ENCODE measurements at regions of chr20 and their contacts with region 1.

Region 1: GRCh38 chr20:42051921-42052320 is 433.7 kb upstream of the CHD6 start:
- DNase-seq: no peak
- H3K4me3 ChIP-seq: no peak overlapping the region
- H3K27ac ChIP-seq: no peak overlapping the region
- H3K4me1 ChIP-seq: no peaks in the 10 kb centered on the region
- H3K27me3 ChIP-seq: no peaks in the 10 kb centered on the region
- CTCF ChIP-seq: no peak
- EP300 ChIP-seq: no peak
- POLR2A ChIP-seq: no peak
- RAD21 ChIP-seq: no peak

Region 2: GRCh38 chr20:42041072-42041471 is 10.8 kb before region 1 on chr20:
- CTCF ChIA-PET with region 1: interaction called, 10 read pairs
- POLR2A ChIA-PET with region 1: no interaction called
- DNase-seq: no peak
- H3K4me3 ChIP-seq: no peak overlapping the region
- H3K27ac ChIP-seq: no peak overlapping the region
- H3K4me1 ChIP-seq: no peaks in the 10 kb centered on the region
- H3K27me3 ChIP-seq: no peaks in the 10 kb centered on the region
- CTCF ChIP-seq: peak in 2 of 3 experiments; percentile 27 to 31; a peak in 3 of 4 replicates
- EP300 ChIP-seq: no peak
- POLR2A ChIP-seq: no peak
- RAD21 ChIP-seq: peak; percentile 34 to 47; a peak in 3 of 4 replicates

Measured in H1 (cell line).